CD8-positive, alpha-beta T cell (primary cell): ENCODE measurements at regions of chr5 and their contacts with region 1.

Region 1: GRCh38 chr5:137743031-137743640 is 7.2 kb upstream of the KLHL3 start:
- DNase-seq: peak in 8 of 9 experiments; percentile 43 to 85 (median 64)
- ATAC-seq: peak; percentile 95
- H3K4me3 ChIP-seq: no peak overlapping the region
- H3K4me3 Mint-ChIP-seq: no peak overlapping the region
- H3K27ac ChIP-seq: no peak overlapping the region
- H3K27ac Mint-ChIP-seq: no peak overlapping the region
- H3K4me1 ChIP-seq: peaks cover 17% of the 10 kb centered on the region
- H3K4me1 Mint-ChIP-seq: peaks cover 17% of the 10 kb centered on the region
- H3K27me3 ChIP-seq: no peaks in the 10 kb centered on the region
- H3K27me3 Mint-ChIP-seq: no peaks in the 10 kb centered on the region
- CTCF ChIP-seq: peak; percentile 74

Region 2: GRCh38 chr5:137651022-137651421 is 92.1 kb before region 1 on chr5:
- CTCF ChIA-PET with region 1: interaction called, 652 read pairs
- POLR2A ChIA-PET with region 1: no interaction called
- intact Hi-C with region 1: no loop called
- DNase-seq: no peak
- ATAC-seq: no peak
- H3K4me3 ChIP-seq: no peak overlapping the region
- H3K4me3 Mint-ChIP-seq: no peak overlapping the region
- H3K27ac ChIP-seq: no peak overlapping the region
- H3K27ac Mint-ChIP-seq: no peak overlapping the region
- H3K4me1 ChIP-seq: no peaks in the 10 kb centered on the region
- H3K4me1 Mint-ChIP-seq: no peaks in the 10 kb centered on the region
- H3K27me3 ChIP-seq: no peaks in the 10 kb centered on the region
- H3K27me3 Mint-ChIP-seq: no peaks in the 10 kb centered on the region
- CTCF ChIP-seq: no peak

Region 3: DNA sequence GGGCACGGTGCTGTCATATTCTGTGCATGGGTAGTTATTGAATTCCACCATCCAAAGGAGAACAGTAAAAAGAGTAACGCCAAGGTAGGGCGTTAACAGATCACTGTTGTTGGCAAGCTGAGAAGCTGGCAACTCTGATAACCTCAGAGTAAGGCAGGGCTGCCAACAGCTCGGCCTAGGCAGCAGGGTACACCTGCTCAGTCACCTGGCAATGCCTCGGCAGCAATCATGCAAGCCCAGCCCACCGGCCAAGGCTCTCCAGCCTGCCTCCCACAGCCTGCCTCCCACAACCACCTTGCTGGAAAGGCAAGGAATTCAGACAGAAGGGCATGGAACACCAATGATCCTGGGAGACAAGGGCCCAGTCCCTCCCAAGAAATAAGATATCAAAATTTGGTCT is 71.1 kb before region 1 on chr5:
- CTCF ChIA-PET with region 1: interaction called, 652 read pairs
- POLR2A ChIA-PET with region 1: no interaction called
- intact Hi-C with region 1: no loop called
- DNase-seq: no peak
- ATAC-seq: no peak
- H3K4me3 ChIP-seq: no peak overlapping the region
- H3K4me3 Mint-ChIP-seq: no peak overlapping the region
- H3K27ac ChIP-seq: no peak overlapping the region
- H3K27ac Mint-ChIP-seq: no peak overlapping the region
- H3K4me1 ChIP-seq: no peaks in the 10 kb centered on the region
- H3K4me1 Mint-ChIP-seq: no peaks in the 10 kb centered on the region
- H3K27me3 ChIP-seq: no peaks in the 10 kb centered on the region
- H3K27me3 Mint-ChIP-seq: no peaks in the 10 kb centered on the region
- CTCF ChIP-seq: no peak

Region 4: DNA sequence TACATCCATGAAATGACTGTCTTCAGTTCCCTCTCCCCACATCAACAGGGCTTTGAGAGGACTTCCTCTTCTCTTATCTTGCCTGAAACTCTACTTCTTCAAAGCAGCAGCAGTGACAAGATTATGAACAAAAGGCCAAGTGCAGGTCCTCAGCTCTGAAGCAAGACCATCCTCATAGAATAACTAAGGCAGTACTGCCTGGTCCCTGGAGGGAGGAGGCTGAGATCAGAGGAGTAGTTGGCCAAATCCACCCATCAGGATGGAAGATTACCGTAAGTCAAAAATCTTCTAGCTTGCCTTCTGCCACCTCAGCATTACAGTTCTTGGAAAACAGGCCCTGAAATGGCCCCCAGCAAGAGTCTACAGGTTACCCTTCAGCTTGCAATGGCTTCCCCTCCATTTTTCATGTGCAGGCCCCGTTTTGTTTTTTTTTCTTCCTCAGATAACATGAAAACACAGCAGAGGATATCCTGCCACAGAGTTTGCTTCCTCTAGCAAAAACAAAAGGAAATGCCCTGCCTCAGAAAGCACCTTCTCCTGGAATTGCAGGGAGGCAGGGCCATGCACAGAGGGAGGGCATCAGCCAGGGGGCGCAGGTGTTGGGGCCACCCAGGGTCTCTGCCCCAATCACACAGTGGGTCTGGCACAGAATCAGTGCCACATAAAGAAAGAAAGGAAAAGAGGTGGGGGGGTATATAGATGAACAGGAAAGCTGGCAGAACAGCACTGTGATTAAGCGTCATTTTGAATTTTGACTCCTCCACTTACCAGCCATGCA is 47.3 kb before region 1 on chr5:
- CTCF ChIA-PET with region 1: interaction called, 83 read pairs
- POLR2A ChIA-PET with region 1: interaction called, 15 read pairs
- intact Hi-C with region 1: loop called in 1 of 2 experiments (anchors 5 kb)
- DNase-seq: peak in 8 of 9 experiments; percentile 13 to 72 (median 22)
- ATAC-seq: peak; percentile 76
- H3K4me3 ChIP-seq: no peak overlapping the region
- H3K4me3 Mint-ChIP-seq: peak overlapping the region; percentile 68
- H3K27ac ChIP-seq: peak overlapping the region; percentile 32 to 66
- H3K27ac Mint-ChIP-seq: peak overlapping the region; percentile 95
- H3K4me1 ChIP-seq: peaks cover 41% of the 10 kb centered on the region
- H3K4me1 Mint-ChIP-seq: peaks cover 55% of the 10 kb centered on the region
- H3K27me3 ChIP-seq: no peaks in the 10 kb centered on the region
- H3K27me3 Mint-ChIP-seq: no peaks in the 10 kb centered on the region
- CTCF ChIP-seq: peak; percentile 23

Region 5: DNA sequence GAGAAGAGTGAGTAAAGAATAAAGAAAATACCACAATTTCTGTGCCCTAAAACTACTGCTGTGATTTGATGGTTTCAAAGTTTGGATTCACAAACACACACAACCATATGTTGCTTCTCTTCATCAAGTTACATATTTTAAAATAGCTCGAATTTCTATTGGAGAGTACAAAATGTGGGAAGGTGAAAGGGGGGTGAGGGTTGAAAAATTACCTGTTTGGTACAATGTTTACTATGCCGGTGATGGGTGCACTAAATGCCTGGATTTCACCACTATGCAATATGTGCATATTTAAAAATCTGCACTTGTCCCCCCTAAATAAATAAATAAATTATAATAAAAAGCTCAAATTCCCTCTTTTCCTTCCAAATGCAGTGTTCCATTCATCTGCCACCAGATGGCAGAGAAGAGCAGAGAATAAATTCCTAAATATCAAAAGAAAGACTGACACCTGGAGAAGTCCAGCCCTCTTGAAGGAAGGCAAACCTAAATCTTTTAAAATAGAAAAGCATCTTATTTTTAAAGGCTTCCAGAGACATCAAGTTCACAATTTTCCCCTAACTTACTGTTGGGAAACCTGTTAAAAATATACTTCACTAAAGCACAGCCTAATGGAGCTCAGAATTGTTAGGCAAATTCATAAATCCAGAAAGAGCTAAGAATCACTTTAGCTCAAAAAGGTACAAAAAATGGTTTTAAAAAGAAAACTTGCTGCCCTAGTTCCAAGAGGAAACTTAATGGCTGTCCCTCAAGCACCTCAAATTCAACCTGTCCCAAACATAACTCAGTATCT is 35.8 kb after region 1 on chr5:
- CTCF ChIA-PET with region 1: interaction called, 11 read pairs
- POLR2A ChIA-PET with region 1: no interaction called
- intact Hi-C with region 1: no loop called
- DNase-seq: peak in 2 of 9 experiments; percentile 39 to 52
- ATAC-seq: no peak
- H3K4me3 ChIP-seq: no peak overlapping the region
- H3K4me3 Mint-ChIP-seq: no peak overlapping the region
- H3K27ac ChIP-seq: no peak overlapping the region
- H3K27ac Mint-ChIP-seq: no peak overlapping the region
- H3K4me1 ChIP-seq: no peaks in the 10 kb centered on the region
- H3K4me1 Mint-ChIP-seq: no peaks in the 10 kb centered on the region
- H3K27me3 ChIP-seq: no peaks in the 10 kb centered on the region
- H3K27me3 Mint-ChIP-seq: no peaks in the 10 kb centered on the region
- CTCF ChIP-seq: peak; percentile 79

Region 6: DNA sequence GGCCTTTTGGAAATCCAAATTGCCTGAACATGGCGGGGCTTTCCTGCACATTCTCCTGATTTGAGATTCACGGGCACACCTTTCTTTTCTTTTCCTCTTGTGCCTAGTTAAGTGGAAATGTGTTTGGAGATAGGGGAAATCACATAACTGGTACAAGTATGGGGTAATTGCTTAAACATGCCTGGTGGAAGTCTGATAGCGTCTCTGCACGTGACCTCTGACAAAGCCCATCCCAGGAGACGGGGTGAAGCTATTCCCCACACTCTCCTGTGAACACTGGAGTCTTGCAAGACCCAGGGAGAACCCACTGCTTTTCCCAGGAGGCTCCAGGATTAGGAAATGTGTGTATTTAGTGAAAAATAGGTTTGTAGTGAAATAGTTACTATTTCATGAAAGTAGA is 692.8 kb after region 1 on chr5:
- CTCF ChIA-PET with region 1: no interaction called
- POLR2A ChIA-PET with region 1: no interaction called
- intact Hi-C with region 1: no loop called
- DNase-seq: no peak
- ATAC-seq: no peak
- H3K4me3 ChIP-seq: no peak overlapping the region
- H3K4me3 Mint-ChIP-seq: no peak overlapping the region
- H3K27ac ChIP-seq: no peak overlapping the region
- H3K27ac Mint-ChIP-seq: no peak overlapping the region
- H3K4me1 ChIP-seq: peaks cover 13% of the 10 kb centered on the region
- H3K4me1 Mint-ChIP-seq: peaks cover 17% of the 10 kb centered on the region
- H3K27me3 ChIP-seq: no peaks in the 10 kb centered on the region
- H3K27me3 Mint-ChIP-seq: no peaks in the 10 kb centered on the region
- CTCF ChIP-seq: no peak